Mammary epithelial cell (primary cell): ENCODE measurements at regions of chrX and their contacts with region 1.

Region 1: GRCh38 chrX:49664824-49665223 is 31.0 kb downstream of the PAGE1 start:
- DNase-seq: no peak
- H3K4me3 ChIP-seq: no peak overlapping the region
- H3K27ac ChIP-seq: no peak overlapping the region
- H3K4me1 ChIP-seq: no peaks in the 10 kb centered on the region
- H3K27me3 ChIP-seq: no peaks in the 10 kb centered on the region
- CTCF ChIP-seq: no peak

Region 2: GRCh38 chrX:49710729-49711304 is 46.0 kb after region 1 on chrX:
- CTCF ChIA-PET with region 1: no interaction called
- dilution Hi-C with region 1: loop called (anchors 5 kb)
- in situ Hi-C with region 1: no loop called
- intact Hi-C with region 1: no loop called
- DNase-seq: no peak
- H3K4me3 ChIP-seq: no peak overlapping the region
- H3K27ac ChIP-seq: no peak overlapping the region
- H3K4me1 ChIP-seq: no peaks in the 10 kb centered on the region
- H3K27me3 ChIP-seq: no peaks in the 10 kb centered on the region
- CTCF ChIP-seq: no peak